ENCODE measurements at regions of chr18 and their contacts with region 1.

Region 1: GRCh38 chr18:35835833-35836232 is 136.6 kb upstream of the RMP24 start:
- DNase-seq: peak; percentile 69 to 95 (median 80)
- H3K4me3 ChIP-seq: peak overlapping the region in 1 of 3 experiments; percentile 41
- H3K4me3 Mint-ChIP-seq: peak overlapping the region in 1 of 2 donors; percentile 58
- H3K27ac ChIP-seq: peak overlapping the region in 1 of 2 donors; percentile 73
- H3K27ac Mint-ChIP-seq: peak overlapping the region; percentile 58 to 90 (median 79)
- H3K4me1 ChIP-seq: peaks cover 60 to 75% of the 10 kb centered on the region in 2 donors
- H3K4me1 Mint-ChIP-seq: peaks cover 73% of the 10 kb centered on the region
- H3K27me3 ChIP-seq: no peaks in the 10 kb centered on the region
- H3K27me3 Mint-ChIP-seq: peaks cover 0 to 4% (median 1%) of the 10 kb centered on the region in 3 donors
- CTCF ChIP-seq: no peak

Region 2: GRCh38 chr18:35653392-35654135 is 182.3 kb before region 1 on chr18:
- intact Hi-C with region 1: no loop called
- DNase-seq: no peak
- H3K4me3 ChIP-seq: no peak overlapping the region
- H3K4me3 Mint-ChIP-seq: no peak overlapping the region
- H3K27ac ChIP-seq: no peak overlapping the region
- H3K27ac Mint-ChIP-seq: peak overlapping the region in 1 of 7 donors; percentile 1
- H3K4me1 ChIP-seq: no peaks in the 10 kb centered on the region
- H3K4me1 Mint-ChIP-seq: peaks cover 7% of the 10 kb centered on the region
- H3K27me3 ChIP-seq: no peaks in the 10 kb centered on the region
- H3K27me3 Mint-ChIP-seq: no peaks in the 10 kb centered on the region
- CTCF ChIP-seq: no peak

Region 3: GRCh38 chr18:35803551-35803950 is 32.3 kb before region 1 on chr18:
- intact Hi-C with region 1: loop called in 1 of 2 experiments (anchors 5 kb)
- DNase-seq: no peak
- H3K4me3 ChIP-seq: no peak overlapping the region
- H3K4me3 Mint-ChIP-seq: no peak overlapping the region
- H3K27ac ChIP-seq: no peak overlapping the region
- H3K27ac Mint-ChIP-seq: no peak overlapping the region
- H3K4me1 ChIP-seq: peaks cover 2 to 7% of the 10 kb centered on the region in 2 donors
- H3K4me1 Mint-ChIP-seq: peaks cover 8% of the 10 kb centered on the region
- H3K27me3 ChIP-seq: peaks cover 3% of the 10 kb centered on the region in 2 donors
- H3K27me3 Mint-ChIP-seq: peaks cover 0 to 14% (median 1%) of the 10 kb centered on the region in 3 donors
- CTCF ChIP-seq: no peak

Region 4: DNA sequence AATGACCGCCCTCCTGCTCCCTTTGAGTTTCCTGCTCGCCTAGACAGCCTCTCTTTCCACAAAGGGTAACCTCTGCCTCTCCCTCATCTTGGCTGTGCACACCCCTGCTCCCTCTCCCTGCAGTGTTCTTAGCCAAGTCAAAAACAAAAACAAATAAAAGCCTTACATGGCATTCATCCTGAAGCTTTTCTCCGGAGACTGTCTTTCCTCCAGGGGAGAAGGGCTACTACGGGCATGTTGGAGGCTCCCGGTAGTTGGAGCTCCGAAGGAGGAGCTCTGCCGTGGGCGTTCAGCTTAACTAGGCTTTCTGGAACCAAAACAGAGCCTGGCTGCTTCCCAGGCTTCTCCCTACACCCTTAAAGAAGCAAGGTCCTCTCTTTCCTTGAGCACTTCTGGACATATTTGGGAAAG is 888.8 kb after region 1 on chr18:
- intact Hi-C with region 1: no loop called
- DNase-seq: no peak
- H3K4me3 ChIP-seq: no peak overlapping the region
- H3K4me3 Mint-ChIP-seq: no peak overlapping the region
- H3K27ac ChIP-seq: no peak overlapping the region
- H3K27ac Mint-ChIP-seq: no peak overlapping the region
- H3K4me1 ChIP-seq: no peaks in the 10 kb centered on the region
- H3K4me1 Mint-ChIP-seq: no peaks in the 10 kb centered on the region
- H3K27me3 ChIP-seq: no peaks in the 10 kb centered on the region
- H3K27me3 Mint-ChIP-seq: peaks cover 3 to 6% (median 5%) of the 10 kb centered on the region in 3 donors
- CTCF ChIP-seq: no peak

Measured in CD14-positive monocyte (primary cell).